Left cardiac atrium (tissue), 4 donors: ENCODE measurements at regions of chr20 and their contacts with region 1.

Region 1: GRCh38 chr20:2086177-2086979 is 15.2 kb upstream of the STK35 start:
- DNase-seq: no peak
- ATAC-seq: peak; percentile 49 to 53

Region 2: GRCh38 chr20:1946762-1947534 is 139.4 kb before region 1 on chr20:
- intact Hi-C with region 1: no loop called
- DNase-seq: peak; percentile 54
- ATAC-seq: peak; percentile 9 to 24

Region 3: GRCh38 chr20:1979106-1979779 is 107.1 kb before region 1 on chr20:
- intact Hi-C with region 1: loop called in 1 of 2 experiments (anchors 10 kb)
- DNase-seq: no peak
- ATAC-seq: no peak

Region 4: GRCh38 chr20:2133318-2134183 is 47.2 kb after region 1 on chr20:
- intact Hi-C with region 1: no loop called
- DNase-seq: no peak
- ATAC-seq: peak; percentile 76 to 83

Region 5: GRCh38 chr20:2429061-2429460 is 342.7 kb after region 1 on chr20:
- intact Hi-C with region 1: no loop called
- DNase-seq: no peak
- ATAC-seq: no peak

Region 6: DNA sequence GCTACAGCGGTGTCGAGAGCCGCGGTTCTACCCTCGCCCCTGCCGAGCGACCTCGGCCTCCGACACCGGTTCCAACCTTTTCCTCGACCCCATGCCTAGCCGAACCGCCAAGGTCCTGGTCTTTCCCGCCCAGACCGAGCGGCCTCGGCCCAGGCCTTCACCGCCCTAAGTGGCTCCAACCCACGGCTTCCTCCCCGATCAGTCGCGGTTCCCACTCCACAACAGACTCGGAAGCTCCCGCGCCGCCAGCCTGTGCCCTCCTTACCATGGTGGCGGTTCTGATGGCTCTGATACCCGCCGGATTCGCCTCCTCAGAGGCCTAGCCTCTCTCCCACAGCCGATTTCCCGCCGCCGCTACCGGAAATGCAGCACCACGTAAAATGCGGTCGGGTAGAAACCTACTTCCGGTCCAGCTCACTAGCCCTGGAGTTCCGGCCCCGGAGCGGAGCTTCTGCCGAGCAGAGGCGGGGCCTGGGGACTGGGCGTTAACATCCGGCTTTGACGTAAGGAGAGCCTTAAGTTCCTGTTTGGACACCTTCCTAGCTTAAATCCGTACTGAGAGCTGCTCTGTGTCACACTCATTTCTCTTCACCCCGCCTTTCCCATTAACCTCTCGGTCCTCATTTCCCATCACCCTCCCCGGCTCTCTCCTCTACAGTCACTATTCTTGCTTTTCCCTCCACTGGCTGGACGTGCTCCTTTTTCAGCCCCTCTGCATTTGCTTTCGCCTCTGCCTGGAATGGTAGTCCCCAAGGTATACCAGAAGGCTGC is 384.2 kb after region 1 on chr20 and contains the start of gene SNRPB:
- intact Hi-C with region 1: no loop called
- DNase-seq: peak; percentile 96
- ATAC-seq: peak; percentile 99
- total RNA-seq, gene SNRPB: 49.5 to 79.4 TPM